Gastrocnemius medialis (tissue), 4 donors: ENCODE measurements at regions of chr3 and their contacts with region 1.

Region 1: DNA sequence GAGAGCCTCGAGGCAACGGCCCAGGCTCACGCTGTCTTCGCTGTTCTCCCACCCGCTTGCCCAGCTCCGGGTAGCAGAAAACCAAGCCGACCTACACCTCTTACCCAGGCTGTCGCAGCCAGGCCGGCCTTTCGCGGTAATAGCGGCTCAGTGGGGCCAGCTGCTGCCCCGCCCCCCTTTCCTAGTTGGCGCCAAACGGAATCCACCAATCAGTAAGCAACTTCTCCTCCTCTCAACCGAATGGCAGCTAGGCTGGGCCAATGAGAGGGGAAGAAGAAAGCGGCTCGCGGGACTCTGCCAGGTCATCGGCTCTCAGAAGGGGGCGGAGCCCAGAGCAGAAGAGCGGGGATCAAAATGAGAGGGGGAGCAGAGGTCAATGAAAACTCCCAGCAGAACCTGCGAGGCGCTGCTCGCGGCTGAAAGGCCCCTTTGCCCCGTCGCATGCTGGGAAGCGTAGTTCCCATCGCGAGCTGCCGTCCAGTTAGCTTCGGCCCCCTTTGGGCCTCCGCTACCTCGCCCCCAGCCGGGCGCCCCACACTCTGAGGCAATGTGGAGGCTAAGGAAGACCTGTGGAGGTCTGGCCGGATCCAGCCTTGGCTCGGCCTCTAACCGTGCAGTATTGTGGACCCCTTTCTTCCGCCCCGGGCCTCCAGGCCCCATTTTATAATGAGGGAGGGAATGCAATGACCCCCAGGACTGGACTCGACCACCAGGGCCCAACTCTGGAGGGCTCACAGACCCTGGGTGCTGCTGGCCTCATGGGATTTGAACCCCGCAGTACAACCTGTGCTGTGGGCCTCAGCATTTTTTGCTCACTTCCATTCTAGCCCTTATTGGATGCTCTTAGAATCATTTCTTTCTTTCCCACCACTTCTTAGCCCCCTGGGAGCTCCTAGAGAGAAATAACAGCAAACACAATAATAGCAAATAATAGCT is at the start of gene CDC25A:
- DNase-seq: peak; percentile 92 to 97
- ATAC-seq: peak; percentile 99
- H3K4me3 ChIP-seq: peak within 1 kb of the TSS; percentile 55 to 92 (median 70)
- H3K27ac ChIP-seq: peak within 1 kb of the TSS; percentile 27 to 54 (median 41)
- H3K4me1 ChIP-seq: peaks cover 10 to 13% of the 10 kb centered on the region in 2 donors
- H3K27me3 ChIP-seq: no peaks in the 10 kb centered on the region
- CTCF ChIP-seq: no peak
- POLR2A ChIP-seq: no peak
- total RNA-seq, gene CDC25A: 0.73 to 2.3 TPM in 2 of 4 donors, not detected in the others

Region 2: DNA sequence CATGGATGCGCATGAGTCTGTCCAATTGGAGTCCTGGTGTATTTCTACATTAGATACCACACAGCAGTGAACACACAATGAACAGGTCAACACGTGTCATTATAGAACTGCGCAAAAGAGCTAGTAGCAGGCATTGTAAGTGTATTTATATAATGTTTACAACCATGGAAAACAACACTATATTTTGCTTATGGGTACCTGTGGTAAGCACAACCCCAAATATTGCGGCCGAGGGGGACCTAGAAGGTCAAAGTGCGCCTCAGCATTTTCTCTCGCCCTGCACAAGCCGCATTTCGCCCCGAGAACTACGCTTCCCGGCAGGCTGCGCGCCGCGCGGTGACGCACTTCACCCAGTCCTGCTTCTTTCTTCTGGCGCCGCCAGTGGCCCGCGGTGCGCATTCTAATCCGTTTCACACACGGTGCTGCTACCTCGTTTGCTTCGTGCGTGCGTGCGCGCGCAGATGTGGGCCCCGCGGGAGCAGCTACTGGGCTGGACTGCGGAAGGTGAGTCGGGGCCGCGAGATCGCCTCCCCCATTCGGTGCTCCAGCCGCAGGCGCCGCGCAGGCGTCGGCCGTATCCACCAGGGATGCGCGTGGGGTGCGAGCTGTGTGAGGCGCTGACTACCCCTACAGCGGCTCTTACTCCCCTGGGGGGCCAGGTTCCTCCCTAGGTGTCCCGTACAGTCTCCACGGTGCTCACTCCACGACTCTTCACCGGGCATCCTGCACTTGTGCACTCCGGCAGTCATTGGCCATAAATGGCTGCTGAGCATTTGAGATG is 52.4 kb after region 1 on chr3 and contains the start of gene ZNF589:
- in situ Hi-C with region 1: no loop called
- intact Hi-C with region 1: loop called (anchors 1 kb)
- DNase-seq: peak; percentile 78 to 90
- ATAC-seq: peak; percentile 84 to 86
- H3K4me3 ChIP-seq: peak within 1 kb of the TSS; percentile 81 to 96 (median 88)
- H3K27ac ChIP-seq: peak within 1 kb of the TSS; percentile 75 to 88 (median 84)
- H3K4me1 ChIP-seq: peaks cover 18 to 24% of the 10 kb centered on the region in 2 donors
- H3K27me3 ChIP-seq: no peaks in the 10 kb centered on the region
- CTCF ChIP-seq: peak in 2 of 5 experiments; percentile 26
- POLR2A ChIP-seq: peak; percentile 57 to 80
- total RNA-seq, gene ZNF589: 1.1 to 9.6 (median 3.0) TPM

Region 3: DNA sequence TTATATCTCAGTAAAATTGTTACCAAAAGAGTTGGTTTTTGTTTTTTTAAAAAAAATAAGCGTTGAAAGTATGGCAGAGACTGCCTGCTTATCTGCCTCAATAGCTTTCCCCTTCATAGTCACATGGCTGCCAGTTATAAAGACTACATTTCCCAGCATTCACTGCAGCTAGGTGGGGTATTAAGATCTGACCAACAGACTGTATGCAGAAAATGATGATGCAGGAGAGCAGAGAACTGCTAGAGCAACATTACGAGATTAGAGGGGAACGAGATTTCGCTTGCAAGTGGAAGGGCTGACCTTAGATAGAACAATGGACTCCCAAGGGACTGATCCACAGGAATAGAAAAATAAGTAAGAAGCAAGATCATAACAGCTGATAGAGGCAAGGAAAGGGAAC is 1208.9 kb after region 1 on chr3:
- in situ Hi-C with region 1: no loop called
- intact Hi-C with region 1: loop called (anchors 5 kb)
- DNase-seq: no peak
- ATAC-seq: peak; percentile 77 to 84
- H3K4me3 ChIP-seq: no peak overlapping the region
- H3K27ac ChIP-seq: peak overlapping the region; percentile 60 to 75 (median 64)
- H3K4me1 ChIP-seq: peaks cover 53 to 57% of the 10 kb centered on the region in 2 donors
- H3K27me3 ChIP-seq: no peaks in the 10 kb centered on the region
- CTCF ChIP-seq: no peak
- POLR2A ChIP-seq: no peak